ENCODE measurements at regions of chr6 and their contacts with region 1.

Region 1: GRCh38 chr6:18503593-18504231 is 116.6 kb downstream of the RNF144B start:
- DNase-seq: peak; percentile 90
- H3K4me3 ChIP-seq: peak overlapping the region; percentile 74
- H3K27ac ChIP-seq: peak overlapping the region; percentile 57
- H3K4me1 ChIP-seq: peaks cover 14% of the 10 kb centered on the region; the same call in 1 of the 2 replicates
- H3K27me3 ChIP-seq: no peaks in the 10 kb centered on the region

Region 2: DNA sequence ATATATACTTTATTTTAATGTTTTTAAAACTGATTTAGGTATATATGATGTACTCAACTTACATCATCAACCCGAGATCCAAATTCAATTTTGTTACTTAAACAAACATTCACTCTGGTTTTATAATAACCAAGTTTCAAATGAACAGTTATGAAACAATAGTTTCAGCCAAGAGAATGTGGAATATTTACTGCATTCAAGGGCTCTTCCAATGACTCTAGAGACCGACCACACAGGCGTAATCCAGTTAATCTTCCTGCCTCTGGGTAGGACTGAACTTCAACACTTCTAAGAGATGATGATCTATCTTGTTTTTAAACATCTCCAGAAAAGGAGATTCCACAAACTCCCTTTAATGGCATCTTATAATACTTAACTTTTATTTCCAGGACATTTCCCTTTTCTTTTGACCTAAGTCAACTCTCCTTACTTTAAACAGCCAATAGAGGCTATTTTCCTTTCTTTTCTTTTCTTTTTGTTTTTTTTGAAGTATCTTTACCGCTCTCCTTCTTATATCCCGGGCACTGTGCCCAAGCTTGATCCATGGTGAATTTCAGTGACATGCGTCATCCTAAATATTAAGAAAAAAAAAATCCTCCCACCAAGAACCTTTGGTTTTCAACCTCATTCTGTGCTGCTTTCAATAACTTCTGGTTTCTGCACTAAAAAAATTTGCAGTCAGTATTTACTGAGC is 626.4 kb before region 1 on chr6:
- in situ Hi-C with region 1: no loop called
- DNase-seq: no peak
- H3K4me3 ChIP-seq: no peak overlapping the region
- H3K27ac ChIP-seq: no peak overlapping the region
- H3K4me1 ChIP-seq: peaks cover 23% of the 10 kb centered on the region
- H3K27me3 ChIP-seq: no peaks in the 10 kb centered on the region

Region 3: DNA sequence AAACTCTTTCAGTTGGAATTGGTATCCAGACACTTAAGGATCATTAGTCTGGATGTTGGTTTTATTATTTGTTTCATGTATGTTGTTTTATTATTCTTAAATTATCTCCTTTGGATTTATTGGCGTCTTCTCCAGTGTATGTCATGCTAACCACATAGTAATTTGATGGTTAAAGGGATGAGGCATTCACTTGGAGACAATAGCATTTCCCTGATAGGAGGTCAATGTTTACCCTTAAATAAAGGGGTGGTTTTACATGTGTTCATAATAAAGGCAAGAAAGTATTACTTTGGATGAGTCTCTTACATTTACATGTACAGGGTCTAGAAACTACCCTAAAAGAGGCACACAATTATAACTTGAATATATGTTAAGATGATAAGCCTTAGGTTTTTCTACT is 167.8 kb before region 1 on chr6:
- in situ Hi-C with region 1: loop called (anchors 5 kb)
- DNase-seq: no peak
- H3K4me3 ChIP-seq: no peak overlapping the region
- H3K27ac ChIP-seq: no peak overlapping the region
- H3K4me1 ChIP-seq: no peaks in the 10 kb centered on the region
- H3K27me3 ChIP-seq: no peaks in the 10 kb centered on the region

Region 4: GRCh38 chr6:18439581-18439980 is 64.1 kb before region 1 on chr6:
- in situ Hi-C with region 1: no loop called
- DNase-seq: no peak
- H3K4me3 ChIP-seq: no peak overlapping the region
- H3K27ac ChIP-seq: no peak overlapping the region
- H3K4me1 ChIP-seq: peaks cover 2% of the 10 kb centered on the region; the same call in 1 of the 2 replicates
- H3K27me3 ChIP-seq: no peaks in the 10 kb centered on the region

Region 5: DNA sequence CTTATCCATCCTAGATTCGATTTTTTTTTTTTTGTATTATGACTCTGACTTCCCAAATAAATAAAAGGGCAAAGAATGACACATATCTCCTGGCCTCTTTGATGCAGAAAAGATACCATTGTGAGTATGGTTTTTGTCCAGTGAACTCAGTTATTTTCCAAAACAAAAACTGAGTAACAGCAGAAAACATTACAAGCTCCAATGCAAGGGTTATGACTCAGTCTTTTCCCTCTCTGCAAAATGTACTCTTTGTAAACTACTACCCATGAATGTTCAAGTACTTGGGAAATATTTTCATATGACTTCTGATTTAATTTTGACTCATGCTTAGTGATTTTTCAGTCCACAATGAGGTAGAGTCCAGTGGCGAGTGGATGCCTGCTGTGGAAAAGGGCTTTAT is 238.7 kb after region 1 on chr6:
- in situ Hi-C with region 1: no loop called
- DNase-seq: peak; percentile 78
- H3K4me3 ChIP-seq: no peak overlapping the region
- H3K27ac ChIP-seq: peak overlapping the region; percentile 53
- H3K4me1 ChIP-seq: peaks cover 7% of the 10 kb centered on the region; the same call in 1 of the 2 replicates
- H3K27me3 ChIP-seq: no peaks in the 10 kb centered on the region